Right ventricle myocardium inferior (tissue), 1 donor: ENCODE measurements at regions of chr5 and their contacts with region 1.

Region 1: DNA sequence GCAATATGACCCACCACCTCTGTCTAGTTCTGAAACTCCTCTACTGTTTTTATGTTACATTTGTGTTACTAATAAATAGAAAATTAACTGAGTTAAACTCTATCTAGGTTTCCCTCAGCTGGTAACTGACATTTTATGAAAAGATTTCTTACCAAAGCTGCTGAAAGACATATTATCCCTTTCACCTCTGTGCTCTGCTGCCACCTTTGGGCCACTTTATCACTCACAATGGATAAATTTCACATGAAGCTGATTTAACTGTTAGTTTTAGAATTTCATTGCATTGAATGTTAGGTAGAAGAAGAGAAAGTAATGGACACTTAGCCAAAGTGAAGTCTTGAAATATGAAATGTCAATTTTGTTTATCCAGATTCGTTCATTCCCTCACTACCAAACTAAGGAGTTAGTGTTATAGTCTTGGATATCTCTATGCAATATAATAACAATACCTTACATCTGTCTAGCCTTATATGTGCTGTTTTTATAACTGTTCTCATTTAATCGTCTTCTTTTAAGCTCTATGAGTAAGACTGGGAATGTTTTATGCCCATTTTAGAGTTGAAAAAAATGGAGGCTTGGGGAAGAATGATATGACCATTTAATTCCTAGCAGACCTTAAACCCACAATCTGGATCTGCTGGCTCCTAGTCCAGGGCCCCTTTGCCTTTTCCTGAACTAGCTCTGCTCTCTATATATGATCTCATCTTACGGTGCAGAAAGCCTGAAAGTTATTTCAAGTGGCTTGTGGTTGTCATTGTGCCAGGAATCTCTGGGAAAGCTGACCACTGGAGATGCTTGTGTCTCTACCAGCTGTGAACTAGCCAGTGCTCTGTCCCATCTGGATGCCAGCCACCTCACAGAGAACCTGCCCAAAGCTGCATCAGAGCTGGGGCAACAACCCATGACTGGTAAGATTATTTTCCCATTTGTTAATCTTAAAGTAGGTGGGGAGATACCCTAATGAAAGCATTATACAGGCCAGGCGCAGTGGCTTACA is 97.1 kb downstream of the GOLPH3 start:
- DNase-seq: no peak
- ATAC-seq: peak; percentile 76

Region 2: GRCh38 chr5:31581498-31582099 is 495.4 kb before region 1 on chr5:
- intact Hi-C with region 1: loop called (anchors 5 kb)
- DNase-seq: no peak
- ATAC-seq: no peak

Region 3: GRCh38 chr5:31825518-31826068 is 251.4 kb before region 1 on chr5:
- intact Hi-C with region 1: loop called (anchors 1 kb)
- DNase-seq: no peak
- ATAC-seq: peak; percentile 72

Region 4: GRCh38 chr5:31921852-31922305 is 155.1 kb before region 1 on chr5:
- intact Hi-C with region 1: loop called (anchors 5 kb)
- DNase-seq: no peak
- ATAC-seq: no peak

Region 5: GRCh38 chr5:32027717-32028321 is 49.2 kb before region 1 on chr5:
- intact Hi-C with region 1: loop called (anchors 1 kb)
- DNase-seq: peak; percentile 75
- ATAC-seq: peak; percentile 93